H1 (cell line): ENCODE measurements at regions of chr5 and their contacts with region 1.

Region 1: DNA sequence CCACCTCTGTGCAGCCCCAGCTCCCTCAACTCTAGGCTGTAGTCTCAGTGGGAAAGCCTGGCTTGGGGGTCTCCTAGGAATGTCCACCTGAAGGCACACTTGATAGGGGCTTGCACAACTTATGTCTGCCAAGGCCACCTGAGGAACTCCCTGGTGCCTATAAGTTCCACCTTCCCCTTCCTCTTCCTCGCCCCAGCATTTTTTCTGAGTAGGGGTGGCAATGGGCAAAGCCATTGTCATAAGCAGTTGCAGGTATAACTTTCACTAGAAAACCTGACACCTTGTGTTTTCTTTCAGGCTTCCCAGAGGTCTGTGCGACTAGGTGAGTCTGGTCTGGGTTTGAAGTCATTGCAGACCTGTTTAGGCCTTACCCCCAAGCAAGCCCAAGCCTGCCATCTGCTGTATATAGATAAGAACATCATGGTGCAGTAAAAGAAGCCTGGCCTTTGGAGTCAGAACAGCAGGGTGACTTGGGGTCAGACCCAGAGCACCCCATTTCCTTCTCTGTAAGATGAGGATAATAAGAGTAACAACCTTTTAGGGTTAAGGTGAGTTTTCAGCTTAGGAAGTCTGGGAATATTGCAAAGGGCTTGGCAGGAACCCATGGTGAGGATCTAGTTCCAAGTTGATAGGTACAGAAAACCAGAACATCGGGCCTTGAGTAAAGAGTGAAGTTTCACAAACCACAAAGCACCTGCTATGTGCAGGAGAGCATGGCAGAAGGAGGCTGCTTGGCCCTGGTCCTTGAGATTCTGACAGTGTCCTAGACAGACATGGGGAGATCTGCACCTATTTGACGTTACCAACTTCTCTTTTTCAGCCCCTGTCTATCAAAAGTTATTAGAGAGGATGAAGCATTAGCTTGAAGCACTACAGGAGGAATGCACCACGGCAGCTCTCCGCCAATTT is 33.8 kb downstream of the TGFBI start:
- DNase-seq: no peak
- H3K4me3 ChIP-seq: no peak overlapping the region
- H3K27ac ChIP-seq: no peak overlapping the region
- H3K4me1 ChIP-seq: peaks cover 0 to 3% (median under 1%) of the 10 kb centered on the region in 4 experiments; a peak in 3 of 7 replicates
- H3K27me3 ChIP-seq: no peaks in the 10 kb centered on the region
- CTCF ChIP-seq: peak in 2 of 3 experiments; percentile 63 to 76; a peak in 3 of 4 replicates
- EP300 ChIP-seq: no peak
- POLR2A ChIP-seq: no peak
- RAD21 ChIP-seq: peak; percentile 85 to 91

Region 2: DNA sequence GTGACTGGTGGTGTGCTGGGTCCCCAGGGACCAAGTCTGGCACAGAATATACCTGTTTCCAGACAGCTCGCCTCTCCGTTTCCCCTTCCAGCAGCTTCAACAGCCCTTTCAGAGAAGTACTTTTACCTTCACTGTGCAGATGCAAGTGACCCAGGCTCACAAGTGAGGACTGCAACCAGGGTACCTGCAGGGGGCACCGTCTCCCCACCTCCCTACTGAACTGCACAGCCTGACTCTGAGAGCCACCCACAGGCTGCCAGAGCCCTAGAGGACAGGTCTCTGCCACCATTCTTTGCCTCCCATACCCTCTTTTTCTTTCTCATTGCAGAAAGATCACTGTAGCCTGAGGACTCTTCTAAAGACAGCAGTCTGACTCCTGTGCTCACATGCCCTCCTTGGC is 182.3 kb before region 1 on chr5:
- CTCF ChIA-PET with region 1: interaction called, 21 read pairs
- POLR2A ChIA-PET with region 1: no interaction called
- DNase-seq: peak; percentile 38 to 74
- H3K4me3 ChIP-seq: no peak overlapping the region
- H3K27ac ChIP-seq: no peak overlapping the region
- H3K4me1 ChIP-seq: peaks cover 3 to 5% (median 4%) of the 10 kb centered on the region in 4 experiments; a peak in 6 of 7 replicates
- H3K27me3 ChIP-seq: no peaks in the 10 kb centered on the region
- CTCF ChIP-seq: peak; percentile 76 to 84 (median 80)
- EP300 ChIP-seq: no peak
- POLR2A ChIP-seq: no peak
- RAD21 ChIP-seq: peak; percentile 68 to 70

Region 3: GRCh38 chr5:135944967-135945560 is 117.6 kb before region 1 on chr5:
- CTCF ChIA-PET with region 1: interaction called, 20 read pairs
- POLR2A ChIA-PET with region 1: no interaction called
- DNase-seq: no peak
- H3K4me3 ChIP-seq: no peak overlapping the region
- H3K27ac ChIP-seq: no peak overlapping the region
- H3K4me1 ChIP-seq: peaks cover 0 to 1% (median 0%) of the 10 kb centered on the region in 4 experiments; a peak in 1 of 7 replicates
- H3K27me3 ChIP-seq: no peaks in the 10 kb centered on the region
- CTCF ChIP-seq: peak in 2 of 3 experiments; percentile 79 to 80; a peak in 3 of 4 replicates
- EP300 ChIP-seq: no peak
- POLR2A ChIP-seq: no peak
- RAD21 ChIP-seq: peak; percentile 77 to 83

Region 4: GRCh38 chr5:135986891-135987401 is 75.7 kb before region 1 on chr5:
- CTCF ChIA-PET with region 1: interaction called, 14 read pairs
- POLR2A ChIA-PET with region 1: no interaction called
- DNase-seq: no peak
- H3K4me3 ChIP-seq: no peak overlapping the region
- H3K27ac ChIP-seq: no peak overlapping the region
- H3K4me1 ChIP-seq: no peaks in the 10 kb centered on the region
- H3K27me3 ChIP-seq: no peaks in the 10 kb centered on the region
- CTCF ChIP-seq: no peak
- EP300 ChIP-seq: no peak
- POLR2A ChIP-seq: no peak
- RAD21 ChIP-seq: no peak

Region 5: GRCh38 chr5:136028782-136029742 is 33.6 kb before region 1 on chr5 and contains the start of gene TGFBI:
- CTCF ChIA-PET with region 1: interaction called, 27 read pairs
- POLR2A ChIA-PET with region 1: no interaction called
- DNase-seq: peak; percentile 27 to 79
- H3K4me3 ChIP-seq: peak within 1 kb of the TSS; percentile 28 to 74 (median 48)
- H3K27ac ChIP-seq: no peak within 1 kb of the TSS
- H3K4me1 ChIP-seq: peaks cover 0 to 4% (median 1%) of the 10 kb centered on the region in 4 experiments; a peak in 4 of 7 replicates
- H3K27me3 ChIP-seq: peaks cover 8 to 39% (median 35%) of the 10 kb centered on the region in 4 experiments
- CTCF ChIP-seq: peak in 1 of 3 experiments; percentile 1; a peak in 1 of 4 replicates
- EP300 ChIP-seq: no peak
- POLR2A ChIP-seq: peak in 1 of 2 experiments; percentile 56; a peak in 1 of 3 replicates
- RAD21 ChIP-seq: no peak; a peak in 1 of 4 replicates
- total RNA-seq, gene TGFBI: 5.9 and 8.5 TPM in 2 replicates

Region 6: DNA sequence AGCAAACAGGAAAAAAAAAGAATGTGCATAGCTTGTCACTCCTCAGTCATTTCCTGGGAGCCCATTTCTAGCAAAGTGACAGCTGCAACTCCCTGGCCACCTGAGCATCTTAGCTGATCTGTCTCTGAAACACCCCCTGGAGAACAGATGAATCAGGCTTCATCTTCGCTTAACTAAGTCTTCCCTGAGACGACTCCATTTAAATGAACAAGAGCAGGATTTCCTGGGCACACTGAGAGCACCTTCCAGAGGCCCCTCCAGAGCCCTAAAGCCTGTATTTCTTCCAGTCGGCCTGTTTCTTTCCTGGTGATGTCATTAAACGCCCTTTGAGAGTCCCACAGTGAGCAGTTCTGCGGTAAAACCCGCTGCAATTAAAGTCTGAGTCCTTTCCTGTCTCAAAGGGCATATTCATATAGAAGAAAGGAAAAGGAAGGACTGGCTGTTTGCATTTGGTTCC is 19.9 kb before region 1 on chr5:
- CTCF ChIA-PET with region 1: interaction called, 30 read pairs
- POLR2A ChIA-PET with region 1: interaction called, 3 read pairs
- DNase-seq: no peak
- H3K4me3 ChIP-seq: no peak overlapping the region
- H3K27ac ChIP-seq: no peak overlapping the region
- H3K4me1 ChIP-seq: no peaks in the 10 kb centered on the region
- H3K27me3 ChIP-seq: peaks cover 0 to 4% (median 0%) of the 10 kb centered on the region in 4 experiments; a peak in 1 of 7 replicates
- CTCF ChIP-seq: no peak
- EP300 ChIP-seq: no peak
- POLR2A ChIP-seq: no peak
- RAD21 ChIP-seq: no peak

Region 7: DNA sequence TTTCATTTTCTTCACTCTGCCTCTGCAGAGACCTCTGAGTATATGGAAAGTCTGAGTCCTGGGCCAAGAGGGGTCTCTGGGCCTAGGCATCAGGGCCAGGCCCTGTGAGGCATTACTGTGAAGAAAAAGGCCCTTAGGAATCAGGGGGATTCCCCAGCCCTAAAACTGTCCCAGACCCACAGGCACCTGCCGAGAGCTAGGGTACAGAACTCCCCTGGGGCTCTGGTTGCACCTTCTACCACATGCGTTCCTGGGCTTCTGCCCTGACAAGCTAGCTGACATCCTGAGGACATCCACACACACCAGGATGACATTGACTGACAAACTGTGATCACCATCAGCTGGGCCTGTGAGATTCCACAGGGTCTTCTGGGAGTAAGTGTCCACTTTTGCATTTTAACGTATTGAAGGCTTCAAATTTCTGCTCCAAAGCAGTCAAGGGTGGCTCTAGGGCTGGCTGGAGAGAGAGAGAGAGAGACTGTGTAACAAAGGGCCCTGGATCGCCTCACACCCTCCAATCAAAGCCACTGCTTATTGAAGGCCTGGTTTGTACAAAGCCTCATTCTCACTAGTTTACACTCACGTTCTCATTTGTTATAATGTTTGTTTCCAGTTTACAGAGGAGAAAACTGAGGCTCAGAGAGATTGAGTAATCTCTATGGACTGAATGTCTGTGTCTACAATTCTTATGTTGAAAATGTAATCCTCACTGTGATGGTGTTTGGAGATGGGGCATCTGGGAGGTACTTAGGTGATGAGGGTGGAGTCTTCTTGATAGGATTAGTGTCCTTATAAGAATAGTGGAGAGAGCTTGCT is 11.3 kb after region 1 on chr5:
- CTCF ChIA-PET with region 1: interaction called, 98 read pairs
- POLR2A ChIA-PET with region 1: no interaction called
- DNase-seq: peak in 1 of 2 experiments; percentile 38
- H3K4me3 ChIP-seq: no peak overlapping the region
- H3K27ac ChIP-seq: no peak overlapping the region
- H3K4me1 ChIP-seq: no peaks in the 10 kb centered on the region
- H3K27me3 ChIP-seq: no peaks in the 10 kb centered on the region; a peak in 1 of 7 replicates
- CTCF ChIP-seq: no peak
- EP300 ChIP-seq: no peak
- POLR2A ChIP-seq: no peak
- RAD21 ChIP-seq: no peak